Motor neuron (in vitro differentiated cells): ENCODE measurements at regions of chr2 and their contacts with region 1.

Region 1: GRCh38 chr2:84495539-84496146 is 20.7 kb upstream of the DNAH6 start:
- ATAC-seq: peak; percentile 62 to 83 (median 69)
- H3K4me3 ChIP-seq: no peak overlapping the region
- H3K27ac ChIP-seq: no peak overlapping the region
- H3K4me1 ChIP-seq: no peaks in the 10 kb centered on the region

Region 2: GRCh38 chr2:84631047-84631446 is 135.4 kb after region 1 on chr2:
- in situ Hi-C with region 1: loop called in 3 of 9 experiments (anchors 10 to 25 kb)
- ATAC-seq: peak in 5 of 8 experiments; percentile 51 to 84 (median 78)
- H3K4me3 ChIP-seq: no peak overlapping the region
- H3K27ac ChIP-seq: no peak overlapping the region
- H3K4me1 ChIP-seq: no peaks in the 10 kb centered on the region

Region 3: DNA sequence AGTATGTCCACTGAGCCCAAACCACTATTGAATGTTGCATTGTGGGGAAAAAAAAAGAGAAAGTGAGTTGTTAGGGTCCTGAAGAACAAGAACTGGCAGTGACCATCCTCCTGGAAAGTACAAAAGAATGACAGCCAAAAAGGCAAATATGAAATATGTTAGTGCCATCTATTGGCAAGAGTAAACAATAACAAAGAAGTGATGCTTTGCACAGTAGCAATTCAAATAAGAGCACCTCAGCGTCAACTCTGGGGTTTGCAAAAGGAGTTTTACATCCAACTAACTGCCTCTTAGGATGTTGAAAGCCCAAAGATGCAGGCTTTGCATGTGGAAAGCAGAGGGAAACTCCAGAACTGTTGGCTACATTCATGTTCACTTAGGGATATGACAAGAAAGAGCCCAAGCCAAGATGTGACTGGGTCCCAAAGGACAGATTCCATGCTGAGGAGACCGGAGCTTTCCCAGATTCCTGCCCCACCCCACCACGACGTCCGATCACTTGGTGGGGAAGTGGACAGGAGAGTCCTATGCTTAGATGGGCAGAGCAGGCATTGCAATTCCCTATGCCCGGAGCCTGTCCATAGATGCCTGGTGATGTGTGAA is 369.6 kb after region 1 on chr2:
- in situ Hi-C with region 1: loop called in 2 of 9 experiments (anchors 10 to 25 kb)
- ATAC-seq: peak in 3 of 8 experiments; percentile 44 to 63 (median 50)
- H3K4me3 ChIP-seq: no peak overlapping the region
- H3K27ac ChIP-seq: no peak overlapping the region
- H3K4me1 ChIP-seq: no peaks in the 10 kb centered on the region

Region 4: GRCh38 chr2:84881581-84882414 is 386.2 kb after region 1 on chr2:
- in situ Hi-C with region 1: loop called in 3 of 9 experiments (anchors 10 to 25 kb)
- ATAC-seq: peak; percentile 58 to 93 (median 78)
- H3K4me3 ChIP-seq: peak overlapping the region; percentile 1 to 43 (median 36)
- H3K27ac ChIP-seq: no peak overlapping the region
- H3K4me1 ChIP-seq: peaks cover 10 to 13% of the 10 kb centered on the region in 2 donors

Region 5: DNA sequence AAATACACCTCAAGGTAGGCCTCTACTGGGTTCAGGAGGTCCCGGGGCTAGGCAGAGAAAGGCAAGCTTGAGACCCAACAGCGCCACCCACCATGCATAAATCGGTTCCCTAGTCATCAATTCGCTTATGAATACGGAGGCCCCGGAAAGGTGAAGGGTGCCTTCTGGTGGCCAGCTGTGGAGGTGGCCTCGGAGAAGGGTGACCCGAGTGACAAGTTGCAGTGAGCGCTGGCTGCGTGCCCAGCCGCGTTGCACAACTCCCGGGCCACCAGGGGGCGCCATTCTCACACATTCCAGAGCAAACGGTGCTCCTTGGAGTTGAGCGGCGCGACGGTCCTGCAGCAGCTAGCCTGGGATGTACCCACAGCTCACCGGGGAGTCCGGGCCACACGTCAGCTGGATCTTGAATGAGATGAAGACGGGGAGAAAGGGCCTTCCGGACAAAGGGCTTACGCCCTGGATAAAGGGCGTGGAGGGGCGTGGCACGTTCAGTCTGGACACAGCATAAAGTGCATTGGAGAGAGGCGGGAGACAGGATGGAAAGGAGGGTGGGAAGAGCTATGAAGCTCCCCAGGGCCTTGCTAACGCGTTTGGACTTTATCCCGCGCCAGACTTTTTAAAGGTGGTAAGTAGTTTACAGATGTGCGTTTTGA is 430.2 kb after region 1 on chr2:
- in situ Hi-C with region 1: loop called in 2 of 9 experiments (anchors 25 kb)
- ATAC-seq: peak; percentile 73 to 93 (median 85)
- H3K4me3 ChIP-seq: peak overlapping the region in 4 of 5 donors; percentile 8 to 38 (median 25)
- H3K27ac ChIP-seq: no peak overlapping the region
- H3K4me1 ChIP-seq: peaks cover 0 to 3% of the 10 kb centered on the region in 2 donors

Region 6: DNA sequence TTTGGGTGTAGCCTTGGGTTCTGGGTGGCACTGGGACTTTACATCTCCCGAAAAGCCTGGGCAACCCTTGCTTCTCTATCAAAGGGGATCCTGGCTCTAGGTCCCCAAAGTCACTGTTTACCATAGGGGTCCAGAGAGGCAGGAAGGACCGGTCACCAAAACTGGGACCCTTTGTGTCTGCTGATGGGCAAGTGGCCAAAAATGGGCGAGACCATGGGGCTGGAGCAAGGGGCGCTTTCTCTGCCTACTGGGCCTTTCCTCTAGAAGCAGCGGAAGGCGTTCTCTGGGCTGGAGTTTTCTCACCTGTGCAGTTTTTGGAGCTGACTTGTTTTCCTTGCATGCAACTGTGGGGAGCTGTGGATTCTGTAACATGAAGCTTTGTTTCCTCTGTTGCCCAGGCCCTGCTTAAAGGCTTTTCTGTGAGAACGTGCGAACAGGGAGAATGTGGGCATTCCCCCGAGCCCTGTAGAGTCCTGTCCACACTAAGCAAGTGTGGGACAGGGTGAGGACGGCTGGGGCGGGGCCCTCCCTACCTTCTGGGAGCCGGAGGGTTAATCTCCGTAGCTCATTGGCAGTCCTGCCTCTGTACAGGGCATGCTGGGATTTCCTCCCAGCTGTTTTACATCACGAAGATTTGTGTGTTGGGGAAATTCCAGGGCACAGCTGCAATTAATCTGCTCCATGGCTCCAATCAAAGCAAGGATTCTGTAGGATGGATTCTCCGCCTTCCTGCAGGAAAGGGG is 781.9 kb after region 1 on chr2:
- in situ Hi-C with region 1: loop called in 2 of 9 experiments (anchors 25 kb)
- ATAC-seq: peak; percentile 55 to 93 (median 88)
- H3K4me3 ChIP-seq: no peak overlapping the region
- H3K27ac ChIP-seq: peak overlapping the region in 1 of 2 donors; percentile 30
- H3K4me1 ChIP-seq: peaks cover 17 to 28% of the 10 kb centered on the region in 2 donors